H1 (cell line): ENCODE measurements at regions of chr19 and their contacts with region 1.

Region 1: GRCh38 chr19:53912653-53913052 is 3.6 kb downstream of the CACNG7 start:
- DNase-seq: peak in 1 of 2 experiments; percentile 94
- H3K4me3 ChIP-seq: no peak overlapping the region
- H3K27ac ChIP-seq: no peak overlapping the region
- H3K4me1 ChIP-seq: peaks cover 0 to 8% (median 2%) of the 10 kb centered on the region in 4 experiments; a peak in 4 of 7 replicates
- H3K27me3 ChIP-seq: peaks cover 0 to 10% (median 5%) of the 10 kb centered on the region in 4 experiments; a peak in 5 of 7 replicates
- CTCF ChIP-seq: peak; percentile 87 to 97 (median 95)
- EP300 ChIP-seq: no peak
- POLR2A ChIP-seq: no peak
- RAD21 ChIP-seq: peak; percentile 61 to 70

Region 2: GRCh38 chr19:53571390-53571789 is 341.3 kb before region 1 on chr19:
- CTCF ChIA-PET with region 1: no interaction called
- POLR2A ChIA-PET with region 1: no interaction called
- DNase-seq: no peak
- H3K4me3 ChIP-seq: no peak overlapping the region
- H3K27ac ChIP-seq: no peak overlapping the region
- H3K4me1 ChIP-seq: no peaks in the 10 kb centered on the region
- H3K27me3 ChIP-seq: no peaks in the 10 kb centered on the region
- CTCF ChIP-seq: no peak
- EP300 ChIP-seq: no peak
- POLR2A ChIP-seq: no peak
- RAD21 ChIP-seq: no peak

Region 3: GRCh38 chr19:53808710-53809125 is 103.9 kb before region 1 on chr19:
- CTCF ChIA-PET with region 1: interaction called, 15 read pairs
- POLR2A ChIA-PET with region 1: no interaction called
- DNase-seq: no peak
- H3K4me3 ChIP-seq: no peak overlapping the region
- H3K27ac ChIP-seq: no peak overlapping the region
- H3K4me1 ChIP-seq: no peaks in the 10 kb centered on the region; a peak in 1 of 7 replicates
- H3K27me3 ChIP-seq: peaks cover 0 to 5% (median 1%) of the 10 kb centered on the region in 4 experiments; a peak in 4 of 7 replicates
- CTCF ChIP-seq: peak in 2 of 3 experiments; percentile 68 to 77; a peak in 3 of 4 replicates
- EP300 ChIP-seq: no peak
- POLR2A ChIP-seq: no peak
- RAD21 ChIP-seq: peak; percentile 84 to 87

Region 4: GRCh38 chr19:53879140-53880081 is 33.2 kb before region 1 on chr19:
- CTCF ChIA-PET with region 1: interaction called, 24 read pairs
- POLR2A ChIA-PET with region 1: interaction called, 9 read pairs
- DNase-seq: peak; percentile 92 to 100
- H3K4me3 ChIP-seq: peak overlapping the region; percentile 44 to 64 (median 60)
- H3K27ac ChIP-seq: peak overlapping the region; percentile 69
- H3K4me1 ChIP-seq: peaks cover 3 to 25% (median 8%) of the 10 kb centered on the region in 4 experiments
- H3K27me3 ChIP-seq: peaks cover 0 to 11% (median 3%) of the 10 kb centered on the region in 4 experiments; a peak in 4 of 7 replicates
- CTCF ChIP-seq: no peak
- EP300 ChIP-seq: no peak; a peak in 1 of 3 replicates
- POLR2A ChIP-seq: peak in 1 of 2 experiments; percentile 74; a peak in 2 of 3 replicates
- RAD21 ChIP-seq: no peak

Region 5: GRCh38 chr19:53927739-53928138 is 15.1 kb after region 1 on chr19:
- CTCF ChIA-PET with region 1: interaction called, 34 read pairs
- POLR2A ChIA-PET with region 1: interaction called, 4 read pairs
- DNase-seq: peak; percentile 79 to 88
- H3K4me3 ChIP-seq: no peak overlapping the region
- H3K27ac ChIP-seq: no peak overlapping the region
- H3K4me1 ChIP-seq: peaks cover 0 to 2% (median 0%) of the 10 kb centered on the region in 4 experiments; a peak in 2 of 7 replicates
- H3K27me3 ChIP-seq: no peaks in the 10 kb centered on the region
- CTCF ChIP-seq: no peak
- EP300 ChIP-seq: peak in 1 of 2 experiments; percentile 59; a peak in 1 of 3 replicates
- POLR2A ChIP-seq: no peak
- RAD21 ChIP-seq: 0 out of 4 replicates have a peak, but pooled peaks of 1 of the 2 experiments have one; percentile 8

Region 6: DNA sequence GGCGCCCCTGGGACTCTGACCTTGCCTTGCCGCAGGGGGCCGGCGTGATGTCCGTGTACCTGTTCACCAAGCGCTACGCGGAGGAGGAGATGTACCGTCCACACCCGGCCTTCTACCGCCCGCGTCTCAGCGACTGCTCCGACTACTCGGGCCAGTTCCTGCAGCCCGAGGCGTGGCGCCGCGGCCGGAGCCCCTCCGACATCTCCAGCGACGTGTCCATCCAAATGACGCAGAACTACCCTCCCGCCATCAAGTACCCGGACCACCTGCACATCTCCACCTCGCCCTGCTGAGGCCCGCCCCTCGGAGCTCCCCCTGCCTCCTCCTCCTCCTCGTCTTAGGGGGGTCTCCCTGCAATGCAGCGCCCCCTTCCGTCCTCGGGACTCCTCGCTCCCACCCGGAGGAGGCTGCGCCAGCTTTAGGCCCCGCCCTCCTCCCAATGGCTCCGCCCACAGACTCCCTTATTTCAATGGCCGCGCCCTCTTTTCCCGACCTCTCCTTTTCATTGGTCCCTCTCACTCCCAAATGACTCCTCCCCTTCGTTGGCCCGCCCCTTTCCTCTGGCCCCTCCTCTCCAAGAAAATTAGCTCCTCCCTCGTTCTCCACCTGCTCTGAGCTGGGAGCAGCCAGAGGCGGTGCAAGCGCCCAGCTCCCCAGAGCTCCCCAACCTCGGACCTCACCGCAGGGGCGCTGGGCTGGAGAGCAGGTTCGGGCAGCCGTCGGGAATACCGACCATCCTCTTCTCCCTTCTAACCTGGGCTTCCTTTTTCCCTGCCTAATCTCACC is 29.5 kb after region 1 on chr19:
- CTCF ChIA-PET with region 1: interaction called, 52 read pairs
- POLR2A ChIA-PET with region 1: interaction called, 14 read pairs
- DNase-seq: peak; percentile 97 to 100
- H3K4me3 ChIP-seq: peak overlapping the region; percentile 76 to 95 (median 88)
- H3K27ac ChIP-seq: peak overlapping the region; percentile 63; the same call in 1 of the 2 replicates
- H3K4me1 ChIP-seq: peaks cover 4 to 10% (median 7%) of the 10 kb centered on the region in 4 experiments; a peak in 6 of 7 replicates
- H3K27me3 ChIP-seq: no peaks in the 10 kb centered on the region
- CTCF ChIP-seq: peak; percentile 60 to 86 (median 82)
- EP300 ChIP-seq: no peak
- POLR2A ChIP-seq: peak; percentile 55 to 88
- RAD21 ChIP-seq: peak; percentile 46 to 65

Region 7: DNA sequence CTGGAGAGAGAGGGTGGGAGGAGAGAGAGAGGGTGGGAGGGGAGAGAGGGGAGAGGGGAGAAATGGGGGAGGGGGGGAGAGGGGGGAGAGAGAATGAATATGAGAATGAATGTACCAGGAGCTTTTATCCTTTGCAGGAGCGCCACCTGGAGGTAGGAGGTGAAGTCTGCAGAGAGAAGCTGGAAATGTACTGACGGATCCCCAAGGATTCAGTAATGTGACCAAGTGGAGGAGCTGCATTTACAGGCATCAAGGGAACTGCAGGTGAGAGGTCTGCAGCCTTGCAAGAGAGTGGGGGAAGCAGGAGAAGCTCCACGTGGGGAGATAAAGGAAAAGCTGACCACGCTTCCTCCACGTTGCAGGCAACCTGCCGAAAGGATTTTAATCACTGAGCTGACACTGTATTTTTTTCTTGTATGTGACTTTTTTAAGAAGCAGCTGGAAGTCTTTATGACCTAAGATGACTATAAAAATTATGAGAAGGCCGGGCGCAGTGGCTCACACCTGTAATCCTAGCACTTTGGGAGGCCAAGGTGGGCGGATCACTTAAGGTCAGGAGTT is 117.4 kb after region 1 on chr19:
- CTCF ChIA-PET with region 1: interaction called, 32 read pairs
- POLR2A ChIA-PET with region 1: no interaction called
- DNase-seq: peak; percentile 50 to 86
- H3K4me3 ChIP-seq: no peak overlapping the region
- H3K27ac ChIP-seq: no peak overlapping the region
- H3K4me1 ChIP-seq: peaks cover 2 to 8% (median 4%) of the 10 kb centered on the region in 4 experiments; a peak in 6 of 7 replicates
- H3K27me3 ChIP-seq: no peaks in the 10 kb centered on the region
- CTCF ChIP-seq: peak; percentile 43 to 79 (median 75)
- EP300 ChIP-seq: no peak
- POLR2A ChIP-seq: no peak
- RAD21 ChIP-seq: peak; percentile 82 to 85